ENCODE measurements at regions of chr1 and their contacts with region 1.

Region 1: DNA sequence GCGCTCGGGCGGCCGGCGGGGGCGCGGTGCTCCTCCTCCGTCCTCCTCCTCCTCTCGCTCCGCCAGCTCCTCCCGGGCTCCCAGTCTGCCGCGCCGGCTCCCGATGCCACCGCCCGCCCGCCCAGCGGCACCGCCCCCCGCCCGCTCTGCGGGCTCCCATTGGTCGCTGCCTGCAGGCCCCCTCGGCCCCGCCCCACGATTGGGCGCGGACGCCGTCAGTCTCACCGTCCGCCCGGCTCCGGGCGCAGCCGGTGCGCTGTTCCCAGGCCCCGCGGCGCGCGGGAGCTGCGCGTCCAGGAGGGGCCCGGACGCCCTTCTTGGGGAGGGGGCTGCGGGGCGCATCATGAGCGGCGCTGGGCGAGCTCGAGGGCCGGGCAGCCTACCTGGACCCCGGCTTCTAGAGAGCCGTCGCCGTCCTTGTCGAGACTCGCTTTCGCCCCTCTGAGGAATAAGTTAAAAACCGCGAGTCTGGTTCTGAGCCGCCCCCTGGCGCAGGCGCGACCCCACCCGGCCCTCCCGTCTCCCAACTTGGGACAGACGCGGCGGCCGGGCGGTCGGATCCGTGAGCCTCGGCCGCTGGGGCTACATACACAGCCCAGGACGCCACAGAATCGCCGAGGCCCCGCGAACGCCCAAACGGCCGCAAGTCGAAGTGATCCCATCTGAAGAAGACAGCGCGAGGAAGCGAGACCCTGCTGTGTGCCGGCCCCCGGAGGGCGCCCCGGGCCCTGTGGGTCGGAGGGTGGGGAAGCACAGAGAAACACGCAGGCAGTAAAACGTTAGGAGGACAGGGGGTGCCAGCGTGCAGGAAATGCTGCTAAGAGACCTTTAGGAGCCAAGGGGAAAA is at the start of gene SIPA1L2:
- DNase-seq: peak; percentile 88
- ATAC-seq: peak; percentile 96
- H3K4me3 ChIP-seq: peak within 1 kb of the TSS; percentile 78
- H3K27ac ChIP-seq: peak within 1 kb of the TSS; percentile 86
- H3K4me1 ChIP-seq: peaks cover 2% of the 10 kb centered on the region; the same call in 1 of the 2 replicates
- H3K27me3 ChIP-seq: no peaks in the 10 kb centered on the region; the same call in 1 of the 2 replicates
- CTCF ChIP-seq: peak; percentile 45
- POLR2A ChIP-seq: no peak
- RAD21 ChIP-seq: peak; percentile 45
- total RNA-seq, gene SIPA1L2: 11.9 and 13.4 TPM in 2 replicates

Region 2: DNA sequence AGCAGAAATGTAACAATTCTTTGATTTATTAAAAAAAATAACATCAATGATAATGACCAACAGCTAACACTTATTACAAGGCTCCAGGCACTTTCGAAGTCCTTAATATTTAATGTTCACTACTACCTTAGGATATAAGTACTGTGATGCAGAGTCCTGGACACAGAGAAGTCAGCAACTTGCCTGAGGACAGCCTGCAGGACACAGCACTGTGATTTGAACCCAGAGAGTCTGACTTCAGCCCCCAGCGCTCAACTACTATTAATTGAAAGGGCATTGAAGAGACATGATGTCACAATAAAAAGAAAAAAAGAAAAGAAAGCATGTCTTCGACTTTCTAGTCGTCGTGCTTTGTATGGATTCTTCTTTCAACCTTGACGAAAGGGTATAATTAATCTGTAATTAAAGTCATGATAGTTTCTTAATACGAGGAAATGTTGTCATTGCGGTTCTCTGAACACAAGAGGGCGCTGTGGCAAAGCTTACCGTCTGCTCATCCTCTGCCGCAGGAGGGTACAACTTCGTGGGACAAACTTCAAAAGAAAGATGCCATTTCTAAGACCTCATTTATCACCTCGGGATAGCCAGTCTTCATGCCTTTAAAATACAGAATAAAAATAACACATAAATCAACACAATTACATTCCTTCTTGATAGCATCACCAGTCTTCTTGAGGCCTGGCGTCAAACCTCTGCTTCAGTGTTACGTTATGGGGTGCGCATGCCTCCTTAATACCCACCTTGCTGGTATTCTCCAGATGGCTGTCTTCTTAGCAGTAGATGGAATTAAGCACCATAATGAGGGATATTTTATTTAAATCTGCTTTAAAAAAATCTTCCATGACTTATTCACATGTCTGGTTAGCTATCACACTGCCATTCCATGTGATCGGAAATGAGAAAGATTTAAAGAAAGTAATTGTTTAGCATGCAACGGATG is 763.6 kb before region 1 on chr1:
- CTCF ChIA-PET with region 1: interaction called, 3 read pairs
- POLR2A ChIA-PET with region 1: no interaction called
- dilution Hi-C with region 1: no loop called
- in situ Hi-C with region 1: loop called (anchors 5 kb)
- intact Hi-C with region 1: loop called (anchors 1 kb)
- DNase-seq: peak; percentile 58
- ATAC-seq: peak; percentile 48; the same call in 1 of the 2 replicates
- H3K4me3 ChIP-seq: no peak overlapping the region
- H3K27ac ChIP-seq: no peak overlapping the region
- H3K4me1 ChIP-seq: peaks cover 6% of the 10 kb centered on the region; the same call in 1 of the 2 replicates
- H3K27me3 ChIP-seq: no peaks in the 10 kb centered on the region
- CTCF ChIP-seq: peak; percentile 84
- POLR2A ChIP-seq: 0 out of 2 replicates have a peak, but pooled peaks have one; percentile 31
- RAD21 ChIP-seq: peak; percentile 94

Region 3: GRCh38 chr1:232012773-232013386 is 617.4 kb before region 1 on chr1:
- CTCF ChIA-PET with region 1: no interaction called
- POLR2A ChIA-PET with region 1: no interaction called
- dilution Hi-C with region 1: no loop called
- in situ Hi-C with region 1: no loop called
- intact Hi-C with region 1: loop called (anchors 10 kb)
- DNase-seq: peak; percentile 96
- ATAC-seq: peak; percentile 70
- H3K4me3 ChIP-seq: no peak overlapping the region
- H3K27ac ChIP-seq: peak overlapping the region; percentile 2; the same call in 1 of the 2 replicates
- H3K4me1 ChIP-seq: peaks cover 16% of the 10 kb centered on the region
- H3K27me3 ChIP-seq: no peaks in the 10 kb centered on the region
- CTCF ChIP-seq: no peak
- POLR2A ChIP-seq: no peak
- RAD21 ChIP-seq: no peak

Region 4: DNA sequence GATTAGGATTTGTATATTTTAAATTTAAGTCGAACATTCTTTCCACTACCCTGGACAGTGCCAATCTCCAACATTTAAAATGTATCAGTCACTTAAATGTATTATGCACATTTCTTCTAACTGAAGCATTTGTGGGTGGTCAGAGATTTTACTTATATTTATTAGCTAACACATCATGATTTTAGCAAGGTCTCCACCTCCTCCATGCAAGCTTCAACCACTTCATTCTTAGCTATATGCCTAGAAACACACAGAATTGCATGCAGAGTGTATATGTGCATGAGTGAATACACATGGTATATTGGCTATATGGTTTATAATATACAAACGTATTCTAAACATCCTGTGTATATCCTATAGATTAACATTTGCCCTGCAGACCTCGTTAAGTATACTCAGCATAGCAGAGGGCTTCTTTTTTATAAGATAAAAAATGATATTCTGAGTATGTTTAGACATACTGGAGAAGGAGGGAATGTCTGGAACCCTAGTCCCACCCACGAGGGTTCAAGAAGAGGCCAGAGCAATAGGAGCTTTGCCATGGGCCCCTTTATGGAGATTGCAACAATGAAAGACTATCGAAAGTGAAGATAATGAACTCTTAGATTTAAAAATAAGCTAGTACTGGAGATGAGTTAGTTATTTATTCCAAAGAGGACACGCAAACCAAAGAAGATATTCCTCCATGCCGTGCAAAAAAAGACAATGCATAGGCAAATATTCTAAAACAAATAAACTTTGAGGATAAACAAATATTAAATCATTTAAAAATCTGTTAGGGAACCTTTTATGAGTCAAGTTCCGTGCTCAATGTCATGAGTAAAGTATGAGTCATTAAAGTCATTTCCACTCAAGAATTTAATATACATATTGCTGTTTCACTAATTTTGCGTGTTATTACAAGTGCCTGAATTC is 480.7 kb before region 1 on chr1:
- CTCF ChIA-PET with region 1: no interaction called
- POLR2A ChIA-PET with region 1: no interaction called
- dilution Hi-C with region 1: no loop called
- in situ Hi-C with region 1: loop called (anchors 25 kb)
- intact Hi-C with region 1: loop called (anchors 10 kb)
- DNase-seq: peak; percentile 84
- ATAC-seq: peak; percentile 87
- H3K4me3 ChIP-seq: no peak overlapping the region
- H3K27ac ChIP-seq: peak overlapping the region; percentile 4; the same call in 1 of the 2 replicates
- H3K4me1 ChIP-seq: no peaks in the 10 kb centered on the region
- H3K27me3 ChIP-seq: no peaks in the 10 kb centered on the region
- CTCF ChIP-seq: no peak
- POLR2A ChIP-seq: no peak
- RAD21 ChIP-seq: no peak

Region 5: GRCh38 chr1:232477728-232478127 is 152.5 kb before region 1 on chr1:
- CTCF ChIA-PET with region 1: interaction called, 3 read pairs
- POLR2A ChIA-PET with region 1: no interaction called
- dilution Hi-C with region 1: no loop called
- in situ Hi-C with region 1: no loop called
- intact Hi-C with region 1: loop called (anchors 5 kb)
- DNase-seq: peak; percentile 98
- ATAC-seq: peak; percentile 79
- H3K4me3 ChIP-seq: no peak overlapping the region
- H3K27ac ChIP-seq: no peak overlapping the region
- H3K4me1 ChIP-seq: peaks cover 14% of the 10 kb centered on the region
- H3K27me3 ChIP-seq: no peaks in the 10 kb centered on the region
- CTCF ChIP-seq: no peak
- POLR2A ChIP-seq: no peak
- RAD21 ChIP-seq: no peak

Region 6: GRCh38 chr1:232943679-232944252 is 313.5 kb after region 1 on chr1:
- CTCF ChIA-PET with region 1: no interaction called
- POLR2A ChIA-PET with region 1: no interaction called
- dilution Hi-C with region 1: no loop called
- in situ Hi-C with region 1: loop called (anchors 10 kb)
- intact Hi-C with region 1: no loop called
- DNase-seq: no peak
- ATAC-seq: no peak
- H3K4me3 ChIP-seq: no peak overlapping the region
- H3K27ac ChIP-seq: no peak overlapping the region
- H3K4me1 ChIP-seq: no peaks in the 10 kb centered on the region
- H3K27me3 ChIP-seq: no peaks in the 10 kb centered on the region; the same call in 1 of the 2 replicates
- CTCF ChIP-seq: no peak
- POLR2A ChIP-seq: no peak
- RAD21 ChIP-seq: no peak

Region 7: DNA sequence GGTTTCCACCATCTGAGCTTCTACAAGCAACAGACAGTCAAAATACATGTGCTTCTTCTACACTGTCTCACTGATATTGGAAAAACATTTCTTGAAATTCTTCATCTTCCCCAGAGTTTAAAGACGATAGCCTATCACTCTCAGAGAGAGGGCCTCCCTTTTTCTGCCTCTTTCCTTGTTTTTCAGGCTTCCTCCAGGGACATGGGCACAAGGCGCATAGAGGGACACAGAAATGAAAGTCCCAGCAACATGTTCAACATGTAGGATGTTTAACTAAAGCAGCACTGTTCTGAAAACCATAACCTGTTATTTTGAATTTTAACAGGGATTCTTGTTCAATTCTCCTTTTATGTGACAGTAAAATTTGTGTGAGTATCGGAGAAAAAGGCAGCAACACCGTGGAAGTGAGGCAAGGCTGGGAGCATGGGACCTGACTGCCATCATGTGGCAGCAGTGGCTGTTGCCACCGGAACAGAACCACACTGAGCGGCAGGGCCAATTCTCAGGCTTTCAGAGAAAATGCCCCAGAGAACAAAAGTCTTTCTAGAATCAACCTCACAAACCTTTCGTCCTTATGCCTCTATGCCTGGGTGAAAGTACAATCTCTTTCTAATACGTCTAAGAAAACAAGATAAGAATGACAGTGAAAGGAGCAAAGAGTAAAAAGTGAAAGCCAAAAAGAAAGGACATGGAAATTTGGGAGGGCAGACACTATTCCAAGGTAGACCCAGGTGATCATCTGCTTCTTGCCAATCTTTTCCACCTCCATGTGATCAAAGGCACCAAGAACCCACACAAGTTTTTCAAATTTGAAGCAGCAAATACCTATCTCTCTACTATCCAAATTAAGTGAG is 610.8 kb after region 1 on chr1:
- CTCF ChIA-PET with region 1: no interaction called
- POLR2A ChIA-PET with region 1: no interaction called
- dilution Hi-C with region 1: no loop called
- in situ Hi-C with region 1: loop called (anchors 5 kb)
- intact Hi-C with region 1: loop called (anchors 1 kb)
- DNase-seq: peak; percentile 42
- ATAC-seq: peak; percentile 71
- H3K4me3 ChIP-seq: no peak overlapping the region
- H3K27ac ChIP-seq: no peak overlapping the region
- H3K4me1 ChIP-seq: peaks cover 4% of the 10 kb centered on the region; the same call in 1 of the 2 replicates
- H3K27me3 ChIP-seq: no peaks in the 10 kb centered on the region
- CTCF ChIP-seq: peak; percentile 76
- POLR2A ChIP-seq: no peak
- RAD21 ChIP-seq: peak; percentile 92

Measured in IMR-90 (cell line).